Gastrocnemius medialis (tissue), 4 donors: ENCODE measurements at regions of chr3 and their contacts with region 1.

Region 1: GRCh38 chr3:180989291-180990163 is at the start of gene DNAJC19:
- DNase-seq: peak; percentile 97
- ATAC-seq: peak; percentile 94 to 98
- H3K4me3 ChIP-seq: peak within 1 kb of the TSS; percentile 74 to 94 (median 84)
- H3K27ac ChIP-seq: peak within 1 kb of the TSS; percentile 91 to 97 (median 92)
- H3K4me1 ChIP-seq: peaks cover 32 to 33% of the 10 kb centered on the region in 2 donors
- H3K27me3 ChIP-seq: no peaks in the 10 kb centered on the region
- CTCF ChIP-seq: no peak
- POLR2A ChIP-seq: peak; percentile 81 to 83
- total RNA-seq, gene DNAJC19: 34.2 to 51.7 (median 38.0) TPM

Region 2: GRCh38 chr3:180601688-180602666 is 387.6 kb before region 1 on chr3 and contains the start of gene TTC14:
- in situ Hi-C with region 1: no loop called
- intact Hi-C with region 1: loop called (anchors 5 kb)
- DNase-seq: peak; percentile 75 to 85
- ATAC-seq: peak; percentile 97 to 99
- H3K4me3 ChIP-seq: peak within 1 kb of the TSS; percentile 84 to 96 (median 90)
- H3K27ac ChIP-seq: peak within 1 kb of the TSS; percentile 63 to 74 (median 67)
- H3K4me1 ChIP-seq: peaks cover 14 to 15% of the 10 kb centered on the region in 2 donors
- H3K27me3 ChIP-seq: no peaks in the 10 kb centered on the region
- CTCF ChIP-seq: no peak
- POLR2A ChIP-seq: peak in 1 of 2 donors; percentile 27
- total RNA-seq, gene TTC14: 5.3 to 14.0 (median 8.8) TPM

Region 3: DNA sequence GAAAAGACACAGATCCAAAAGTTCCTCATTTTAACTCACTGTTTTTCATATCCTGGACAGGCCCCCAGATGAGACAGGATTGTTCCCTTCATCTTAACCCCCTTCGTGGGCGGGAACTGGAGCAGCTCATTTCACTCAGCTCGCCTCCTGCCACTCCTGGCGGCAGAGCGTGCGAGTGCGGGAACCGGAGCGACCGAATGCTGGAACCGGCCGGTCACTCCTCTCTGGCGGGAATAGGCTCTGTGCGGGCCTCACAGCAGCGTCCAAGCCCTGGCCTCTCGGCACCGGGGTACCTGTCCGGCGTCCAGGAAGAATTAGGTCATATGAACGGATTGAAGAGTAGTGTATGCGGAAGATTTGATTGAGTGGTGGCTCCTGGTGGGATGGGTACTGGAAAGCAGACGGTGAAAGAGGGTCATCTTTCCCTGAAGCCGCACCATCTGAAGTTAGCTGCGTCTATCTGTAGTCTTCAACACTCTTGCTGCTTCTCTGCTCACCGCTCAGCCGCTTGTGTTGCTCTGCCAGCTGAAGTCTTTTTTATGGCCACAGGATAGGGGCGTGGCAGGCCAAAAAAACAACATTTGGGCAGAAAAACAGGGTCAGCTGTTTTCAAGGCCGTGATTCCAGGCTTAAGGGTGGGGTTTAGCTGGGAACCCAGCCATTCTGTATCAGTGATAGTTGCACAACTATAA is 119.4 kb before region 1 on chr3:
- in situ Hi-C with region 1: no loop called
- intact Hi-C with region 1: loop called (anchors 2 kb)
- DNase-seq: peak; percentile 45 to 62
- ATAC-seq: peak; percentile 35 to 53
- H3K4me3 ChIP-seq: peak overlapping the region; percentile 52 to 62 (median 54)
- H3K27ac ChIP-seq: peak overlapping the region; percentile 85 to 89 (median 86)
- H3K4me1 ChIP-seq: peaks cover 18 to 26% of the 10 kb centered on the region in 2 donors
- H3K27me3 ChIP-seq: no peaks in the 10 kb centered on the region
- CTCF ChIP-seq: peak in 1 of 5 experiments; percentile 25
- POLR2A ChIP-seq: peak; percentile 35 to 53

Region 4: GRCh38 chr3:181052256-181052655 is 62.7 kb after region 1 on chr3:
- in situ Hi-C with region 1: no loop called
- intact Hi-C with region 1: no loop called
- DNase-seq: no peak
- ATAC-seq: no peak
- H3K4me3 ChIP-seq: no peak overlapping the region
- H3K27ac ChIP-seq: no peak overlapping the region
- H3K4me1 ChIP-seq: no peaks in the 10 kb centered on the region
- H3K27me3 ChIP-seq: no peaks in the 10 kb centered on the region
- CTCF ChIP-seq: no peak
- POLR2A ChIP-seq: no peak

Region 5: GRCh38 chr3:181417748-181418147 is 428.2 kb after region 1 on chr3:
- in situ Hi-C with region 1: no loop called
- intact Hi-C with region 1: no loop called
- DNase-seq: no peak
- ATAC-seq: no peak
- H3K4me3 ChIP-seq: no peak overlapping the region
- H3K27ac ChIP-seq: no peak overlapping the region
- H3K4me1 ChIP-seq: no peaks in the 10 kb centered on the region
- H3K27me3 ChIP-seq: no peaks in the 10 kb centered on the region
- CTCF ChIP-seq: no peak
- POLR2A ChIP-seq: no peak